ENCODE measurements at regions of chr7 and their contacts with region 1.

Region 1: DNA sequence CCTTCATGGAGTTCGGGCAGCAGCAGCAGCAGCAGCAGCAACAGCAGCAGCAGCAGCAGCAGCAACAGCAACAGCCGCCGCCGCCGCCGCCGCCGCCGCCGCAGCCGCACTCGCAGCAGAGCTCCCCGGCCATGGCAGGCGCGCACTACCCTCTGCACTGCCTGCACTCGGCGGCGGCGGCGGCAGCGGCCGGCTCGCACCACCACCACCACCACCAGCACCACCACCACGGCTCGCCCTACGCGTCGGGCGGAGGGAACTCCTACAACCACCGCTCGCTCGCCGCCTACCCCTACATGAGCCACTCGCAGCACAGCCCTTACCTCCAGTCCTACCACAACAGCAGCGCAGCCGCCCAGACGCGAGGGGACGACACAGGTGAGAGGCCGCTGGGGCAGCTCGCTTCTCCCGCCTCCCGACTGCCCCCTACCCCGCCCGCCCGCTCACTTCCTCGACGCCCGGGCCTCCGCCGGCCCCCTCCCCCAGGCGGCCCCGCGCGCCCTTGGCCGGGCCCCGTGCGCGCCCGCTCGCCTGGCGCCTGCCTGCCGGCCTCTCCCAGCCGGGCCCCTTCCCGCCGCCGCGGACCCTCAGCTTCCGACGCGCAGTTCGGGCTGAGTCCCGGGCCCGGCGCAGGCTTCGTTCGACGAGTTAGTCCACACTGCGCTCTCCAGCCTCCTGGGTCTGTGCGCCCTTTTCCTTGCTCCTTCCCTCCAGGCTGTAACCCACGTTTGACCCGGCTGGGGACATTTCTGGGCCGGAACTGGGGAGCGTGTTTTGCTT is 873 bp downstream of the DLX6 start:
- DNase-seq: peak in 21 of 42 donors; percentile 35 to 82 (median 57)

Region 2: GRCh38 chr7:96691702-96692101 is 314.5 kb before region 1 on chr7:
- intact Hi-C with region 1: loop called (anchors 10 kb)
- DNase-seq: no peak

Region 3: GRCh38 chr7:97104719-97105238 is 98.6 kb after region 1 on chr7:
- intact Hi-C with region 1: no loop called
- DNase-seq: peak; percentile 52 to 93 (median 85)

Measured in head of caudate nucleus (tissue), 42 donors.